ENCODE measurements at regions of chr9 and their contacts with region 1.

Region 1: DNA sequence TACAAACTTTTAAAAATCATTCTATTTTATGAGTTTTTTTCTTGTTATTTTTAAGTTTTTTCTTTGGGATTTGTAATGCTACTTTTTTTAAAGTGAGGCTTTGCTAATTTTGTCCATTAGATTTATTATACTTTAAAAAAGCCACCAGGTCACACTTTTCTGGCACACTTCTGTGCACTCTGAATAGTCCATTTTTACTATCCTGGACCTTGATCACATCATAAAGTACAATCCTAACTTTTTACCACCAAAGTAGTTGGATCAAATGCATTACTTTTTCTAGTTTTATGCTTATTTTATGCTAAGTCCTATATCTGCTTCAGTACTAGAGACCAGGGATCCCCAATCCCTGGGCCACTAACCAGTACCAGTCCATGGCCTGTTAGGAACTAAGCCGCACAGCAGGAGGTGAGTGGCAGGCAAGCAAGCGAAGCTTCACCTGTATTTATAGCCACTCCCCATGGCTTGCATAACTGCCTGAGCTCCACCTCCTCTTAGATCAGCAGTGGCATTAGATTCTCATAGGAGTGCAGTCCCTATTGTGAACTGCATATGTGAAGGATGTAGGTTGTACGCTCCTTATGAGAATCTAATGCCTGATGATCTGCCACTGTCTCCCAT is 16.0 kb downstream of the FRRS1L start:
- DNase-seq: no peak
- ATAC-seq: no peak
- H3K4me3 ChIP-seq: no peak overlapping the region
- H3K4me3 Mint-ChIP-seq: no peak overlapping the region
- H3K27ac ChIP-seq: no peak overlapping the region
- H3K27ac Mint-ChIP-seq: no peak overlapping the region
- H3K4me1 ChIP-seq: no peaks in the 10 kb centered on the region
- H3K4me1 Mint-ChIP-seq: no peaks in the 10 kb centered on the region
- H3K27me3 ChIP-seq: peaks cover 0 to 2% of the 10 kb centered on the region in 2 experiments
- H3K27me3 Mint-ChIP-seq: peaks cover under 1 to 3% of the 10 kb centered on the region in 2 donors

Region 2: DNA sequence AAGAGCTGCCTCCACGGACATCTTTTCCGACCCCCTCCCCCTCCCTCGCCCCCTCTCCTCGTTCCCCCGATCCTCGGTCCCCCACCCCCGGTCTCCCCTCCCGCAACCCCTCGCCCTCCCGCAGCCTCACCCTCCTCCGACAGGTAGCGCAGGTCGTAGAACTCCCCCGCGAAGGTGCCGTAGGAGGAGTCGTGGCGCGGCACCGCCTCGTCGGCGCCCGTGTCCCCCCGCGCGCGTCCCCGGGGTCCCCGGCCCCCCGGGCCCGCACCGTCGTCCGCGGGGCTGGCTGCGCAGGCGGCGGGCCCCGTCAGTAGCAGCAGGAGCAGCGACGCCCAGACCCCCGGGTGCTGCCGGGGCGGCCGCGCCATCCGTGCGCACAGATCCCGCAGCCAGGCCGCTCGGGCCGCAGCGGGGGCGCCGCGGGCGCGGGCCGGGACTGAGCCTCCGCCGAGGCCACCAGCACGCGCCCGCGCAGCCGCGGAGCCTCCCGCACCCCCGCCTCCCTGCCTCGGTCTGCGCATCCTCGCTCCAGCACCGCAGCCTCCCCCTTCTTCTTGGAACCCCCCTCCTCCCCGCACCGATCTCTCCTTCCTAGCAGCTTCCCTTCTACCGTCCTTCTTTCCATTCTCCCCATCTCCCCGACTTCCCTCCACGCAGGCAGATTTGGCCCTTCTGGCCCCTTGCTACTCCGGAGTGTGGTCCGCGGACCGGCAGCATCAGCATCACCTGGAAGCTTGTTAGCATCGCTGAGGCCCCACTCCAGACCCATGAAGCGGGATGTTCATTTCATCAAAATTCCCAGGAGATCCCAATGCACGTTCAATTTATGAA is 16.0 kb after region 1 on chr9 and contains the start of gene FRRS1L:
- CTCF ChIA-PET with region 1: no interaction called
- POLR2A ChIA-PET with region 1: no interaction called
- DNase-seq: no peak
- ATAC-seq: no peak
- H3K4me3 ChIP-seq: peak within 1 kb of the TSS in 1 of 2 donors; percentile 26
- H3K4me3 Mint-ChIP-seq: peak within 1 kb of the TSS; percentile 43 to 75 (median 44)
- H3K27ac ChIP-seq: no peak within 1 kb of the TSS
- H3K27ac Mint-ChIP-seq: no peak within 1 kb of the TSS
- H3K4me1 ChIP-seq: peaks cover 0 to 2% of the 10 kb centered on the region in 2 experiments
- H3K4me1 Mint-ChIP-seq: peaks cover 2 to 5% (median 4%) of the 10 kb centered on the region in 3 donors
- H3K27me3 ChIP-seq: peaks cover 4 to 30% of the 10 kb centered on the region in 2 experiments
- H3K27me3 Mint-ChIP-seq: peaks cover 57 to 68% of the 10 kb centered on the region in 2 donors
- total RNA-seq, gene FRRS1L: 0.03 TPM in 1 of 5 donors, not detected in the others

Region 3: DNA sequence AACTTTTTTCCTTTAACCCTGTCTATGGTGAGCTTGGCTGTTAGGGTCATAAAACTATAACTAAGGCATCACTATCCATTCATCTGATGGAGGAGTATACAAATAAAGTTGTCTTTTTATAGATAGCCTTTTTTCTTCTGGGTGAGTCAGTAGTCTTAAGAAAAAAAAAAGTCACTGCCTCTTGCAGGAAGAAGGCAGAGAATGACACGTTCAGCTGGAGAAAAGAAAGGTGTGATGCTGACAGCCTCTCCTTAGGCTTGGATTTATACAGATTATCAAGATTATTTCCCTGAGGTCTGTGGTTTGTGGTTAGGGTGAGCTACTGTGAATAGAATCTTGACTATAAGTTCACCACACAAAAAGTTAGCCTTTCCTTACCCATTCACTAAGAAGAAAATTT is 146.9 kb after region 1 on chr9:
- CTCF ChIA-PET with region 1: no interaction called
- POLR2A ChIA-PET with region 1: interaction called in 1 of 2 experiments, 11 read pairs
- DNase-seq: no peak
- ATAC-seq: no peak
- H3K4me3 ChIP-seq: no peak overlapping the region
- H3K4me3 Mint-ChIP-seq: no peak overlapping the region
- H3K27ac ChIP-seq: no peak overlapping the region
- H3K27ac Mint-ChIP-seq: no peak overlapping the region
- H3K4me1 ChIP-seq: no peaks in the 10 kb centered on the region
- H3K4me1 Mint-ChIP-seq: peaks cover 7 to 10% (median 8%) of the 10 kb centered on the region in 3 donors
- H3K27me3 ChIP-seq: peaks cover 0 to 14% of the 10 kb centered on the region in 2 experiments
- H3K27me3 Mint-ChIP-seq: peaks cover 15 to 39% of the 10 kb centered on the region in 2 donors

Measured in T-cell (primary cell).